ENCODE measurements at regions of chr15 and their contacts with region 1.

Region 1: DNA sequence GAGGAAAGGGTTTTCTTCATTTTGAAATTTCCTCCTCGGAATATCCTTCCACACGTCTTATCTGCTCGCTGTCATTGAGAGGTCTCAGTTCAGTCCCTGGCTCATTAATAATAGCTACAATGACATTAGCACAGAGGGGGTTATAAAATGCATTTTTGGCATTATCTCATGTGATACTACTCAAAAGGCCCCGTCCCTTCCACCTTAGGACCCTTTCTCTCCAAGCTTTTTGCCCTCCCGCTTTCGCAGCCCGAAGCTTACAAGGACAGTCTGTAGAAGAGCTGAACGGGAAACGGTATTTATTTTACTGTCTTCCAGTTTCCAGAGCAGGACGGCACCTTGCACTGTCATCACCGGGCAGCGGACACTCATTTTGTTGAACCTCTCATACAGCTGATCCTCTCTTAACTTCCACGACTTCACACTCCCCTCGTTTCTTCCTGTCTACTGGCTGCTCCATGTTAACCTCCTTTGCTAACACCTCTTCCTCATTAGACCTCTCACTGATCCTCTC is 5.6 kb upstream of the PLEKHO2 start:
- DNase-seq: no peak
- H3K4me3 ChIP-seq: no peak overlapping the region
- H3K27ac ChIP-seq: no peak overlapping the region
- H3K4me1 ChIP-seq: no peaks in the 10 kb centered on the region; the same call in 1 of the 2 replicates
- H3K27me3 ChIP-seq: no peaks in the 10 kb centered on the region
- CTCF ChIP-seq: no peak

Region 2: GRCh38 chr15:64753480-64754185 is 82.4 kb before region 1 on chr15:
- CTCF ChIA-PET with region 1: interaction called, 11 read pairs
- POLR2A ChIA-PET with region 1: no interaction called
- intact Hi-C with region 1: no loop called
- DNase-seq: no peak
- H3K4me3 ChIP-seq: no peak overlapping the region
- H3K27ac ChIP-seq: no peak overlapping the region
- H3K4me1 ChIP-seq: peaks cover 15% of the 10 kb centered on the region
- H3K27me3 ChIP-seq: no peaks in the 10 kb centered on the region
- CTCF ChIP-seq: no peak